ENCODE measurements at regions of chr17 and their contacts with region 1.

Region 1: DNA sequence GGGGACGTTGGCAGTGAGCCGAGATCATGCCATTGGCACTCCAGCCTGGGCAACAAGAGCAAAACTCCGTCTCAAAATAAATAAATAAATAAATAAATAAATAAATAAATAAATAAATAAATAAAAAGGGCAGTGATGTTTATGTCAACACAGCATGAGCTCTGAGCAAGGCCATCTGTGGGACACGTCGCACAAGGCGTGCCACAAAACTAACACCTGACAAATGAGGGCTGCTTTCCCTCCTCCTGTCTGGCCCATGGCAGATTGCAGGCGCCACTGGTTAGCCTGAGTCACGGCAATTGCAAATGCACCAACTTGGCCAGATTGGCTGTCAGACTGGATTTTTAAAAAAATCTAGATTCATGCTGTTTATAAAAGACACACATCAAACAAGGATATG is 25.9 kb upstream of the SPNS3 start:
- DNase-seq: no peak
- H3K4me3 ChIP-seq: no peak overlapping the region
- H3K27ac ChIP-seq: no peak overlapping the region
- H3K27me3 ChIP-seq: no peaks in the 10 kb centered on the region
- CTCF ChIP-seq: no peak

Region 2: DNA sequence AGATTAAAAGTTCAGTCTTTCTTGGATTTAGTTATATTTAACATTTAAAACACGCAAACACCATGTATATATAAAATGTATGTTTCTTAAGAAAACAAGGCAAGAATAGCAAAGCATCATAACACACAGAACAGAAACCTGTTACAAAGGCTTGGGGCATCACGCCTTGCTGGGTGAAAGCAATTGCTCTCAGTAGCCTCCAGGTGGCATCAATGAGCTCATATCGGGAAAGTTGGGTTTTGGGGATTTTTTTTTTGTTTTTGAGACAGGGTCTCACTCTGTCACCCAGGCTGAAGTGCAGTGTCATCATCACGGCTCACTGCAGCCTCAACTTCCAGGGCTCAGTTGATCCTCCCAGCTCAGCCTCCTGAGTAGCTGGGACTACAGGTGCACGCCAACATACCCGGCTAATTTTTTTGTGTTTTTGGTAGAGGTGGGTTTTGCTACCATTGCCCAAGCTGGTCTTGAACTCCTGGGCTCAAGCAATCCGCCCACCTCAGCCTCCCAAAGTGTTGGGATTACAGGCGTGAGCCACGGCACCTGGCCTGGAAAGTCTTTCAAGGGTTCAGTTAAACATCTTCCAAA is 207.9 kb before region 1 on chr17:
- CTCF ChIA-PET with region 1: interaction called, 35 read pairs
- POLR2A ChIA-PET with region 1: interaction called, 6 read pairs
- DNase-seq: no peak
- H3K4me3 ChIP-seq: no peak overlapping the region
- H3K27ac ChIP-seq: no peak overlapping the region
- H3K27me3 ChIP-seq: no peaks in the 10 kb centered on the region
- CTCF ChIP-seq: peak; percentile 83

Region 3: DNA sequence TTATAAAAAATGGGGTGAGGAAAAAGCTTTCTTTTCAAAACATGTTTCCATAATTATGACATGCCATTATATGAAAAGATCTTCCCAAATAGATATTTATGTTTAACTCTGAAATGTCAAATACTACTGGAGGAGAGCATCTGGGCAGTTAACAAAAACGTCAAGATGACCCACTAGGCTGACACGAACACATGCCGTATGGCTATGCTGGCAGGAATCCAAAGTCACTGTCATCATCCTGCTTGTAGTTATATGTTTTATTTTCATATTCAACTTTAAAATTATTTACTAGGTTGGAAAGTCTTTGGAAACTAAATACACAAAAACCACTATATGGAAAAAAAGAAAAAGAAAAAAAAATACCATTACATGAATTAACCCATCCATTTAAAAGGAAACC is 171.4 kb before region 1 on chr17:
- CTCF ChIA-PET with region 1: no interaction called
- POLR2A ChIA-PET with region 1: interaction called, 11 read pairs
- DNase-seq: no peak
- H3K4me3 ChIP-seq: no peak overlapping the region
- H3K27ac ChIP-seq: no peak overlapping the region
- H3K27me3 ChIP-seq: no peaks in the 10 kb centered on the region
- CTCF ChIP-seq: no peak

Region 4: DNA sequence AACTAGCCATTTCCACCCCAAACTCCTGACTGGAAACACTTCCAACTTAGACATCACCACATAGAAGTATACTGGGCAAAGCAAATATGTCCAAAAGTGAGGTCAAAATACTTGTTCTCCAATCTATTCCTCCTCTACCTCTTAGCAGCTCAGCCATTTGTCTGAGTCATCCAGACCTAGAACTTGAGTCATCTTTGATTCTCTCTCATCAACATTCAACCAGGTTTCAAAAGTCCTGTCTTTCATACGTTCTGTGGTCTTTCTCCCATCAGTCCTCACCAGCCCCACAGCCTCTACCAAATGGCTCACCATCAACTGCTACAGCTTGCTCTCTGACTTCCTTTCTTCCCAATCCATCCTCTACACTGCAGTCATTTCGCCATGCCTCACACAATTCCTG is 150.9 kb before region 1 on chr17:
- CTCF ChIA-PET with region 1: interaction called, 3 read pairs
- POLR2A ChIA-PET with region 1: interaction called, 17 read pairs
- DNase-seq: no peak
- H3K4me3 ChIP-seq: no peak overlapping the region
- H3K27ac ChIP-seq: no peak overlapping the region
- H3K27me3 ChIP-seq: no peaks in the 10 kb centered on the region
- CTCF ChIP-seq: no peak

Region 5: GRCh38 chr17:4540224-4540641 is 132.4 kb after region 1 on chr17:
- CTCF ChIA-PET with region 1: no interaction called
- POLR2A ChIA-PET with region 1: no interaction called
- DNase-seq: no peak
- H3K4me3 ChIP-seq: no peak overlapping the region
- H3K27ac ChIP-seq: no peak overlapping the region
- H3K27me3 ChIP-seq: no peaks in the 10 kb centered on the region
- CTCF ChIP-seq: no peak

Region 6: GRCh38 chr17:4565209-4566141 is 157.6 kb after region 1 on chr17:
- CTCF ChIA-PET with region 1: no interaction called
- POLR2A ChIA-PET with region 1: no interaction called
- DNase-seq: peak; percentile 38
- H3K4me3 ChIP-seq: no peak overlapping the region
- H3K27ac ChIP-seq: no peak overlapping the region
- H3K27me3 ChIP-seq: peaks cover 17% of the 10 kb centered on the region
- CTCF ChIP-seq: peak; percentile 93

Measured in AG04450 (cell line).